HCT116 (cell line): ENCODE measurements at regions of chr1 and their contacts with region 1.

Region 1: GRCh38 chr1:16613185-16614147 is at the start of gene NBPF1:
- DNase-seq: peak; percentile 94
- ATAC-seq: peak; percentile 98
- H3K4me3 ChIP-seq: peak within 1 kb of the TSS; percentile 61 to 75
- H3K27ac ChIP-seq: peak within 1 kb of the TSS; percentile 58
- H3K4me1 ChIP-seq: peaks cover 16 to 23% of the 10 kb centered on the region in 2 experiments
- H3K27me3 ChIP-seq: no peaks in the 10 kb centered on the region
- CTCF ChIP-seq: no peak
- POLR2A ChIP-seq: peak; percentile 97
- RAD21 ChIP-seq: no peak
- total RNA-seq, gene NBPF1: 46.0 TPM

Region 2: DNA sequence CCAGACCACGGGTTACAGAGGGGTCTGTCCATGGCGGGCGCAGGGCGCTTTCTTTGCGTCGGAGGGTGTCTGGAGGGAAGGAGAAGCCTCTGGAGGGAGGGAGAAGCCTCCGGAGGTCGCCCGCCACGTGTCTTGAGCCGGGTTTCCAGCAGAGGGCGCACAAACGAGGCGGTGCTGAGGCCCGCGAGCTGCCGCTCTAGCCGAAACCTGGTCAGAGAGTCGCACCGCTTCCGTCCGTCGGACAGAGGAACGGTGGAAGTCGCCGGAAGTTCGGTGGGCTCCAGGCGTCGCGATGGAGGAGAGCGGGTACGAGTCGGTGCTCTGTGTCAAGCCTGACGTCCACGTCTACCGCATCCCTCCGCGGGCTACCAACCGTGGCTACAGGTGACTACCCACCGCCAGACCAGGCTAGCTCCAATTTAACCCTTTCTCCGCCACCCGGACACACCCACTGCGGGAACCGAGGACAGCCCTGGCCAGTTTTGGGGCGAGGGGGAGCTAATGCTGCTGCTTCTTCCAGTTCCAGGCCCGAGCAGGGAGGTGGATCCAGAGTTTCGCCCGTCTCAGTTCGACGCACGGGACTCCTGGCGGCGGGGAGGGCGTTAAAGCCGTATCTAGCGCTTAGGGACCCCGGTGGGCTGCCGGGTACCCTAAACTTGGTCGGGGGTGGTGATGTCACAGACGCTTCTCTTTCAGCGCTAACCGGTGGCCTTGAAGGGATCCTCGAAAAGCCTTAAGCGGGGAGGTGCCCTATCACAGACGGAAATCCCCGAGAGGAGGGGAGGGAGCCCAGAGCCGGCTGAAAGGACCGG is 172.8 kb before region 1 on chr1 and contains the start of gene NECAP2:
- CTCF ChIA-PET with region 1: no interaction called
- POLR2A ChIA-PET with region 1: no interaction called
- RAD21 ChIA-PET with region 1: no interaction called
- intact Hi-C with region 1: loop called (anchors 1 kb)
- DNase-seq: peak; percentile 88
- ATAC-seq: peak; percentile 95
- H3K4me3 ChIP-seq: peak within 1 kb of the TSS; percentile 99 to 100
- H3K27ac ChIP-seq: peak within 1 kb of the TSS; percentile 79
- H3K4me1 ChIP-seq: peaks cover 4 to 13% of the 10 kb centered on the region in 2 experiments; a peak in 3 of 4 replicates
- H3K27me3 ChIP-seq: no peaks in the 10 kb centered on the region
- CTCF ChIP-seq: peak; percentile 52 to 90 (median 73)
- POLR2A ChIP-seq: peak; percentile 87
- RAD21 ChIP-seq: peak; percentile 62
- total RNA-seq, gene NECAP2: 35.5 TPM

Region 3: DNA sequence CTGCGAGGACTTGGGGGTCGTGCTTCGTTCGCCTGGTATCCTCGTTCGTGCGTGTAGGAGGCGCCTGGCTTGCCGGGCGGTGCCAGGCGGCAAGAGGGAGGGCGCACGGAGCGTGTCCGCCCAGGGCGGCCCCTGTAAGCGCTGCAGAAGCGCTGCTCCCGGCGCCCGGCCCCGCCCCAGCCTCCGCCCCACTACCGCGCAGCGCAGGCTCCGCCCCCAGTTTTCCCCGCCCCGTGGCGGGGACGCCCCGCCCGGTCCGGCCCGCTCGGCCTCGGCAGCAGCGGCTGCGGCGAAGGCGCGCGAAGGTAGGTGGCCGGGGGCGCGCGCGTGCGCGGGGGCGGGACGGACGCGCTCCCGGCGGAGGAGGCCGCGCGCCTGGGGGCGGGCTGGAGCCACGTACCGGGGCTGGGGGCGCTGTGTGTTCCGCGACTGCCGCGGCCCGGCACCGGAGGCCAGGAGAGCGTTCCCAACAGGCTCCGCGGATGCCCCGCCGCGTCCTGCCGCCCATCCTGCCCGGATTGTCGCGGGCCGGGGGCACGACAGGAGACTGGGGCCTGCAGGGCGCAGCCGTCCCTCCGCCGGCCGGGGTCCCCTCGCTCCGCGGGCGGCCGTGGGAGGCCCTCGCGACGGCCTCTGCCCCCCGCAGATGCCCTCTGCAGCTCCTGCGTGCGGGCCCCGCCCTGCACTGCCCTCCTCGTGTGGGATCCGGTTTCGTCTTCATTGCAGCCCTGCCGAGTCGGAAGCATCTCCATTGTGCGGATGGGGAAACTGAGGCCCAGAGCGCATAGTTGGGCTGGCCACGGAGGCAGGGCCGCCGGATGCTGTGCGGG is 300.6 kb after region 1 on chr1:
- CTCF ChIA-PET with region 1: no interaction called
- POLR2A ChIA-PET with region 1: no interaction called
- RAD21 ChIA-PET with region 1: no interaction called
- intact Hi-C with region 1: no loop called
- DNase-seq: peak; percentile 84
- ATAC-seq: peak; percentile 96
- H3K4me3 ChIP-seq: peak overlapping the region; percentile 67 to 89
- H3K27ac ChIP-seq: peak overlapping the region; percentile 89
- H3K4me1 ChIP-seq: peaks cover 13 to 37% of the 10 kb centered on the region in 2 experiments
- H3K27me3 ChIP-seq: no peaks in the 10 kb centered on the region
- CTCF ChIP-seq: no peak
- POLR2A ChIP-seq: no peak
- RAD21 ChIP-seq: no peak